ENCODE measurements at regions of chr18 and their contacts with region 1.

Region 1: GRCh38 chr18:54856105-54856646 is 27.9 kb downstream of the RAB27B start:
- DNase-seq: no peak
- H3K4me3 ChIP-seq: no peak overlapping the region
- H3K27ac ChIP-seq: no peak overlapping the region
- H3K4me1 ChIP-seq: no peaks in the 10 kb centered on the region
- H3K27me3 ChIP-seq: no peaks in the 10 kb centered on the region
- CTCF ChIP-seq: no peak
- POLR2A ChIP-seq: no peak

Region 2: GRCh38 chr18:54585743-54586142 is 270.4 kb before region 1 on chr18:
- intact Hi-C with region 1: no loop called
- DNase-seq: no peak
- H3K4me3 ChIP-seq: no peak overlapping the region
- H3K27ac ChIP-seq: no peak overlapping the region
- H3K4me1 ChIP-seq: no peaks in the 10 kb centered on the region
- H3K27me3 ChIP-seq: no peaks in the 10 kb centered on the region
- CTCF ChIP-seq: no peak
- POLR2A ChIP-seq: no peak

Region 3: DNA sequence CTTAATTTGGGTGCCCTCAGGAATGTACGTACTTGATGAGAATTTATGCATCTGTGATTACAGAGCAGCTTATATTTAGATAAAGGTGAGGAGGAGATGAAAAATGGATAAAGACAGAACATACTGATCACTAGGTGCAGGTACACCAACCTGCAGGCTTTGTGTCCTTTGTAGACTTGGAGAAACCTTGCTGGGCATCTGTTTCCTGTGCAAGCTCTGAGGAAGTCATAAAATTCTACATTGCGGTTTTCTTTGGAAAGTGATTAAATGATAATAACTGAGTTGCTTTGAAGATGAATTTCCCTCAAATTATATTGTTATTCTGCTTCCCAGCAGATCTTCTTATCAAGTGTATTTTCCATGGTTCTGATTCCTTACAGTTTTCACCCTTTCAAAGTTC is 20.2 kb before region 1 on chr18:
- intact Hi-C with region 1: loop called (anchors 2 kb)
- DNase-seq: no peak
- H3K4me3 ChIP-seq: no peak overlapping the region
- H3K27ac ChIP-seq: no peak overlapping the region
- H3K4me1 ChIP-seq: no peaks in the 10 kb centered on the region
- H3K27me3 ChIP-seq: no peaks in the 10 kb centered on the region
- CTCF ChIP-seq: no peak
- POLR2A ChIP-seq: no peak